Ascending aorta (tissue), 2 donors: ENCODE measurements at regions of chr9 and their contacts with region 1.

Region 1: DNA sequence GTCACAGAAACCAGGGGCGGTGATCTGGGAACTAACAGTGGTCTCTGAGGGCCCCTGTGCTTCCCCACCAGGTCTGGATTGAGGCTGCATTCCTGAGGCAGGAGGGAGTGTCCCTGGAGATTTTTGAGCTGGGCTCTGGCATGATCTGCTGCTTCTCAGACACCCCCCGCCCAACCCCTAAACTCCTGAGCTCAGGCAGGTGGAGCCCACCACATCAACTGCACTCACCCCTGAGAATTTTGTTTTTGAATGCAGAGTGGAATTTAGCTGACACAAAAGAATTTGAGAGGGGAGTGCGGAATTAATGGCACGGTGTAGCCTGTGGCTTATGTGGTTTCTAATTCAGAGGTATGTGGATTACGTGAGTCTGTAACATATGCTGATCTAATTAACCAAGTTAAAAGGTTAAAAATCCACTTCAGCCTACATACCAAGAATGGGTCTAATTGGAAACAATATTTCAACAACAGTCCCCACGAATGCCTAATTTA is 23.9 kb upstream of the CTSL start:
- DNase-seq: no peak
- H3K4me3 ChIP-seq: no peak overlapping the region
- H3K27ac ChIP-seq: no peak overlapping the region
- H3K4me1 ChIP-seq: no peaks in the 10 kb centered on the region
- H3K27me3 ChIP-seq: no peaks in the 10 kb centered on the region
- CTCF ChIP-seq: no peak

Region 2: DNA sequence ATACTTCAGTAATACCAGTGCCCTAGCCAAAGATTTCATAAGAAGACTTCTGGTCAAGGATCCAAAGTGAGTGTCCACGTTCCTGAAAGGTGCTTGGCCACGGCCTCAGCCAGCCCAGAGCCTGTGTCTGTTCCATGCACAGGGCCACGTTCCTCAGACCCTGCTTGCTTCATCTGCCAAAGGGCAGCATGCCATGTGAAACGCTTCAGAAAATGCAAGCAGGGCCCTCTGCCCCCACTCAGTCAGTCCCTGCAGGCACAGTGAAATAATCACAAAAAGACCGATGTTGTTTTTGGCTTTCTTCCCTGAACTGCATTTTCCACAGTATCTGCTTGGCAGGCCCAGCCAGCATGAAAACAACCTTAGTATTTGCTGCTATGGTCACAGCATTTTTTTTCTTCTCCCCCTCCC is 61.6 kb before region 1 on chr9:
- intact Hi-C with region 1: loop called (anchors 10 kb)
- DNase-seq: no peak
- H3K4me3 ChIP-seq: no peak overlapping the region
- H3K27ac ChIP-seq: no peak overlapping the region
- H3K4me1 ChIP-seq: no peaks in the 10 kb centered on the region
- H3K27me3 ChIP-seq: no peaks in the 10 kb centered on the region
- CTCF ChIP-seq: no peak

Region 3: DNA sequence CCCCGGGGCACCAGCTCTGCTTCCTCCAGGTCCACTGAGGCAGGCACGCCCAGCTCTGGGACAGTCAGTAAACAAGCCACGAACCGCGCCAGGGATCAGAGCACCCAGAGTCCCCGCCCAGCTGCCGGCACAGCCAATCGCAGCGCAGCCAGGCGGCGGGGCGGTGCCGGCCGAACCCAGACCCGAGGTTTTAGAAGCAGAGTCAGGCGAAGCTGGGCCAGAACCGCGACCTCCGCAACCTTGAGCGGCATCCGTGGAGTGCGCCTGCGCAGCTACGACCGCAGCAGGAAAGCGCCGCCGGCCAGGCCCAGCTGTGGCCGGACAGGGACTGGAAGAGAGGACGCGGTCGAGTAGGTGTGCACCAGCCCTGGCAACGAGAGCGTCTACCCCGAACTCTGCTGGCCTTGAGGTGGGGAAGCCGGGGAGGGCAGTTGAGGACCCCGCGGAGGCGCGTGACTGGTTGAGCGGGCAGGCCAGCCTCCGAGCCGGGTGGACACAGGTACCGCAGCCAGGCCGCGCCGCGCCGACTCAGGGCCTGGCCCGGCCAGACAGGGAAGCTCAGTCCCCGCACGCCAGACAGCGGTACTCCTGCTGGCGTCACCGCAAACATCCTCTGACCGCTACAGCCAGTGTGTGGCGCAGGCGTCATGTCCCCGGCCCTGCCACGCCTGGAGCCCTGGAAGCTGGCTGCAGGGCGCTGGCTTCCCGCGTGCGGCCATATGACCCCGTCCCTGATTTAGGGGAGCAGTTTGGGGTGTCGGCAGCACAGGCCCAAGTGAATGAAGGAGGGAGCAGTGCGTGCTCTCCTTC is 24.1 kb after region 1 on chr9 and contains the start of gene CTSL:
- intact Hi-C with region 1: no loop called
- DNase-seq: peak; percentile 75 to 96
- H3K4me3 ChIP-seq: peak within 1 kb of the TSS; percentile 73 to 76
- H3K27ac ChIP-seq: peak within 1 kb of the TSS; percentile 95 to 98
- H3K4me1 ChIP-seq: peaks cover 6 to 10% of the 10 kb centered on the region in 2 donors
- H3K27me3 ChIP-seq: no peaks in the 10 kb centered on the region
- CTCF ChIP-seq: peak in 1 of 3 experiments; percentile 25
- total RNA-seq, gene CTSL: 97.8 TPM

Region 4: DNA sequence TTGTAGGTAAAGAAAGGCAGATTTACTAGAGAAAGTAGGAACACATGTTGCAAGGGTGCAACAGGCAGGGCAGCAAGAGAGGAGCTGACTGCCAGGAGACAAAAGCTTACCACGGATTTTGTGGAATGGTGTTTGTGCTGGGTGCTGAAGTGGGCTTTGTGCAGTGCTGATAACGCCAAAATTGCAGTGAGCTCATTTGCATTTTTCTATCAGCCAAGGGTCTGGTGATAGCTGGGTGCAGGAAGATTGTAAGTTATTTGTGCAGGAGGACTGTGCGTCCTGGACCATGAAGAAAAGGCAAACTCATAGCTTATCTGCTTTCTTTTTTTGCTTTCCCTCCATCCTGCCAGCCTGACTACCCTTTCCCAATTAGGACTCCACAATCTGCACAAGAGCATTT is 37.6 kb after region 1 on chr9:
- intact Hi-C with region 1: loop called (anchors 5 kb)
- DNase-seq: no peak
- H3K4me3 ChIP-seq: no peak overlapping the region
- H3K27ac ChIP-seq: no peak overlapping the region
- H3K4me1 ChIP-seq: no peaks in the 10 kb centered on the region
- H3K27me3 ChIP-seq: no peaks in the 10 kb centered on the region
- CTCF ChIP-seq: no peak